ENCODE measurements at regions of chr1 and their contacts with region 1.

Region 1: DNA sequence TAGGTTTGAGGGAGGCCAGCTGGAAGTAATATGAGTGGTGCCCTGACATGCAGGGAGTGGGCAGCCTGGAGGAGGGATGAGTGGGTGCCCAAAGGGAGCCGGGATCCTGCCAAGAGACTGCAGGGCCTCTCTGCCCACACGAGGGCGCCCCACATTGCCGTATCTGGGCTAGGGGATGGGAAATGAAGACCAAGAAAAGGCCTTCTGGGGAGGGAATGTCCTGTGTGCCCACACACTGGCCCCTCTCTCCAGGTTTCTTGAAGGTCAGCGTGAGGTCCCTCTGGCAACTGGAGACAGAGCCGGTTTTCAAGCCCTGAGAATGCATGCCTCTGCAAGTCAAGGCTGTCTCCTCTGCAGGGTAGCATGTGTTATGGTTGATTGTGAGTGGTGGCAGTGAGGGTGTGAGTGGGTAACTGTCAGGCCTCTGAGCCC is 94.1 kb upstream of the PPM1J start:
- DNase-seq: peak; percentile 79 to 84
- H3K4me3 ChIP-seq: no peak overlapping the region
- H3K4me3 Mint-ChIP-seq: no peak overlapping the region
- H3K27ac Mint-ChIP-seq: peak overlapping the region; percentile 59
- H3K4me1 ChIP-seq: peaks cover 52% of the 10 kb centered on the region
- H3K4me1 Mint-ChIP-seq: peaks cover 48% of the 10 kb centered on the region
- H3K27me3 ChIP-seq: no peaks in the 10 kb centered on the region
- H3K27me3 Mint-ChIP-seq: no peaks in the 10 kb centered on the region
- CTCF ChIP-seq: peak; percentile 65 to 77

Region 2: GRCh38 chr1:112836642-112837041 is 27.4 kb after region 1 on chr1:
- CTCF ChIA-PET with region 1: interaction called, 3 read pairs
- POLR2A ChIA-PET with region 1: no interaction called
- intact Hi-C with region 1: loop called (anchors 1 kb)
- DNase-seq: no peak
- H3K4me3 ChIP-seq: no peak overlapping the region
- H3K4me3 Mint-ChIP-seq: no peak overlapping the region
- H3K27ac Mint-ChIP-seq: no peak overlapping the region
- H3K4me1 ChIP-seq: peaks cover 22% of the 10 kb centered on the region
- H3K4me1 Mint-ChIP-seq: peaks cover 19% of the 10 kb centered on the region
- H3K27me3 ChIP-seq: no peaks in the 10 kb centered on the region
- H3K27me3 Mint-ChIP-seq: no peaks in the 10 kb centered on the region
- CTCF ChIP-seq: no peak

Region 3: GRCh38 chr1:112849425-112850033 is 40.3 kb after region 1 on chr1:
- CTCF ChIA-PET with region 1: no interaction called
- POLR2A ChIA-PET with region 1: no interaction called
- intact Hi-C with region 1: loop called (anchors 2 kb)
- DNase-seq: peak; percentile 77 to 79
- H3K4me3 ChIP-seq: peak overlapping the region; percentile 81
- H3K4me3 Mint-ChIP-seq: peak overlapping the region; percentile 78
- H3K27ac Mint-ChIP-seq: peak overlapping the region; percentile 99
- H3K4me1 ChIP-seq: peaks cover 25% of the 10 kb centered on the region
- H3K4me1 Mint-ChIP-seq: peaks cover 7% of the 10 kb centered on the region
- H3K27me3 ChIP-seq: no peaks in the 10 kb centered on the region
- H3K27me3 Mint-ChIP-seq: no peaks in the 10 kb centered on the region
- CTCF ChIP-seq: no peak

Region 4: GRCh38 chr1:112866151-112866550 is 56.9 kb after region 1 on chr1:
- CTCF ChIA-PET with region 1: interaction called, 4 read pairs
- POLR2A ChIA-PET with region 1: no interaction called
- intact Hi-C with region 1: loop called (anchors 5 kb)
- DNase-seq: peak; percentile 52 to 71
- H3K4me3 ChIP-seq: no peak overlapping the region
- H3K4me3 Mint-ChIP-seq: peak overlapping the region; percentile 44
- H3K27ac Mint-ChIP-seq: peak overlapping the region; percentile 92
- H3K4me1 ChIP-seq: peaks cover 57% of the 10 kb centered on the region
- H3K4me1 Mint-ChIP-seq: peaks cover 43% of the 10 kb centered on the region
- H3K27me3 ChIP-seq: no peaks in the 10 kb centered on the region
- H3K27me3 Mint-ChIP-seq: no peaks in the 10 kb centered on the region
- CTCF ChIP-seq: no peak

Region 5: DNA sequence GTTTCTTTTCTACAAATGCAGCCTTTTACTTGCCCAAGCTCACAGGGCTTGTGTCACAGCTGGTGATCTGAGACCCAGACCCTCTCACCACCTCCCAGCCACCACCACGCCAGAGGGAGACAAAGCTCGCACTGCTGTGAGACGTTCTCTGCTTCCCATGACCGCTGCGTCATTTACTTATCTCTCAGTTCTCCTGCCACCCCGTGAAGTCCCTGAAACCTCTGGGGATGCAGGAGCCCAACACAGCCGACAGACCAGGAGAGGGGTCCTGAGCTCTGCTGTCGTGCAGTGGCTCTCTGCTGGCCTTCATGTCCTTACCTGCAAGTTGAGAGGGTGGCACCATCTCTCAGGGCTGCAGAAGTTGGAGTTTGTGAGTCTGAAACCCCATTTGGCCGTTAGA is 69.1 kb after region 1 on chr1:
- CTCF ChIA-PET with region 1: no interaction called
- POLR2A ChIA-PET with region 1: no interaction called
- intact Hi-C with region 1: no loop called
- DNase-seq: no peak
- H3K4me3 ChIP-seq: no peak overlapping the region
- H3K4me3 Mint-ChIP-seq: no peak overlapping the region
- H3K27ac Mint-ChIP-seq: no peak overlapping the region
- H3K4me1 ChIP-seq: peaks cover 14% of the 10 kb centered on the region; the same call in 1 of the 2 replicates
- H3K4me1 Mint-ChIP-seq: peaks cover 11% of the 10 kb centered on the region
- H3K27me3 ChIP-seq: no peaks in the 10 kb centered on the region
- H3K27me3 Mint-ChIP-seq: no peaks in the 10 kb centered on the region
- CTCF ChIP-seq: no peak

Measured in Caco-2 (cell line).